ENCODE measurements at regions of chr9 and their contacts with region 1.

Region 1: DNA sequence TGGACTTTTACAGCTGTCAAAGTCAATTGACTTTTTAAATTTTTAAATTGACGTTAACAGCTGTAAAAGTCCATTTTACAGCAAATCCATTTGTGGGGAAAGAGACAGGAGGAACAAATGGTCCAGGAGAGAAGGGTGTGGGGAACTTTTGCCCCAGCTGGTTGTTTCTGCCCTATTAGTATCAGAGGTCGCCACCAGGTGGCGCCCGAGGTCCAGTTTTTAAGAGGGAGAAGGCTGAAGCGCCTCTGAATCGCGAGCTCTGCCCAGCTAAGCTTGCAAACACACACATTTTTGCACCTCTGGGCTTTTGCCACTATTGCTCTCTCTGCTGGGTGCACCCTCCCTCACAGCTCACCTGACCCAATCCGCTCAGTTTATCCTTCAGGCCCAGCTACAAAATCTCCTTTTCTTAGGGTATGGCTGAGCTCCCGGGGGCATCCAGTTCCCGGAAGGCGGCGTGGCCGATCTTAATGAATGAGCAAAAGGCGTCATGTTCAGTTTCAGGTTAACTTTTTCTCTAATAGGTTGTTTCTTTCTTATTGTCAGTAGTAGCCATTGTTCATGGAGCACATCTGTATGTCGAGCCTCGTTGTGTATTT is 6.3 kb upstream of the TTLL11 start:
- DNase-seq: peak; percentile 84
- H3K4me3 ChIP-seq: no peak overlapping the region
- H3K27ac ChIP-seq: no peak overlapping the region
- H3K4me1 ChIP-seq: no peaks in the 10 kb centered on the region
- CTCF ChIP-seq: peak; percentile 88

Region 2: DNA sequence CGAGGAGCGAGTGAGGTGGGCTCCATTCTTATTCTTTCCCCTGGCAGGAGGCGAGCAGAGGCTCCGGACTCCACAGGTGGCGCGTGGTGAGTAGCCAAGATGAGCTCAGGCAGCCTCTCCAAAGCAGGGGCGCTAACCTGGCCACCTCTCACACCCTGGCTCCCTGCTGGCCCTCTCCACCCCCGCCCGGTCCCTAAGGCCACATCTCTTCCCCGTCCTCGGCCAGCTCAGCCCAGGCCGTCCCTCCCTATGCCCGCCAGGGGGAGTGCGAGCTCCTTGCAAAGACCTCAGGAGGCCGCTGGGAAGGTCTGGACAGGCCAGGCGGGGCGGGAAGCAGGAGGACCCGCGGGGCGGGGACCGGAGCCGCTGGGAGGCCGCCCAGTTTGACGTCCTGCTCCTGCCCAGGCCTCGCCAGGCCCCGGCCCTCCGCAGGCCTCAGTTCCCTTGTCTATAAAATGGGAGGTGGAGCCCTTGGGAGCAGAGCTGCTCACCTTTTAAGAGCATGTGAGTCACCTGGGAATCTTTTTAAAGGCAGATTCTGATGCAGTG is 553.4 kb before region 1 on chr9:
- CTCF ChIA-PET with region 1: no interaction called
- POLR2A ChIA-PET with region 1: no interaction called
- intact Hi-C with region 1: loop called (anchors 5 kb)
- DNase-seq: peak; percentile 78
- H3K4me3 ChIP-seq: no peak overlapping the region
- H3K27ac ChIP-seq: no peak overlapping the region
- H3K4me1 ChIP-seq: peaks cover 4% of the 10 kb centered on the region
- CTCF ChIP-seq: peak; percentile 86

Region 3: DNA sequence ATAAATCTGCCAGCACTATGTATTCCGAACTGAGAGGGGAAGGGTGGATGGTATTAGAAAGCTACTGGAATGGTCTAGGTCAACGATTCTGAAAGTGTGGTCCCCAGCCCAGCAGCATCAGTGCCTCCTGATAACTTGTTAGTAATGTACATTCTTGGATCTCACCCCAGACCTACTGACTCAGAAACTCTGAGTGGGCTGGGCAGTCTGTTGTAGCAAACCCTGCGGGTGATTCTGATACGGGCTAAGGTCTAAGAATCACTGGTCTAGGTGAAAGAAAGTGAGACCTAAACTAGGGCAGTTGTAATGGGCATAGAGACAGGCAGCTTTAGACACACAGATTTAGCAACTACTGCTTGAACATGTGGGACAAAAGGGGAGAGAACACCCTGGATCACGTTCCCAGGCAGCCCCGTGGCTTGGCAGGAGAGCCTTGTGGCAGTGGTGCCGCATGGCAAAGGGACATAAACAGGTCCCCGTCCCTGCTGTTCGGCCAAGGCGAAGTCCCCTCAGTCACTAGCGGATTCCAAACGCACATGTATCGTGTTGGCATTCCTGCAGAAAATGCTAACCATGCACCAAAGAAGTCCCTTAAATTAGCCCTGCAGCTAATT is 222.6 kb before region 1 on chr9:
- CTCF ChIA-PET with region 1: no interaction called
- POLR2A ChIA-PET with region 1: no interaction called
- intact Hi-C with region 1: no loop called
- DNase-seq: no peak
- H3K4me3 ChIP-seq: no peak overlapping the region
- H3K27ac ChIP-seq: no peak overlapping the region
- H3K4me1 ChIP-seq: no peaks in the 10 kb centered on the region
- CTCF ChIP-seq: no peak

Region 4: GRCh38 chr9:122125158-122125508 is 25.8 kb after region 1 on chr9:
- CTCF ChIA-PET with region 1: interaction called, 10 read pairs
- POLR2A ChIA-PET with region 1: interaction called, 3 read pairs
- intact Hi-C with region 1: loop called (anchors 1 kb)
- DNase-seq: peak; percentile 74
- H3K4me3 ChIP-seq: no peak overlapping the region
- H3K27ac ChIP-seq: no peak overlapping the region
- H3K4me1 ChIP-seq: peaks cover 5% of the 10 kb centered on the region
- CTCF ChIP-seq: peak; percentile 92

Region 5: DNA sequence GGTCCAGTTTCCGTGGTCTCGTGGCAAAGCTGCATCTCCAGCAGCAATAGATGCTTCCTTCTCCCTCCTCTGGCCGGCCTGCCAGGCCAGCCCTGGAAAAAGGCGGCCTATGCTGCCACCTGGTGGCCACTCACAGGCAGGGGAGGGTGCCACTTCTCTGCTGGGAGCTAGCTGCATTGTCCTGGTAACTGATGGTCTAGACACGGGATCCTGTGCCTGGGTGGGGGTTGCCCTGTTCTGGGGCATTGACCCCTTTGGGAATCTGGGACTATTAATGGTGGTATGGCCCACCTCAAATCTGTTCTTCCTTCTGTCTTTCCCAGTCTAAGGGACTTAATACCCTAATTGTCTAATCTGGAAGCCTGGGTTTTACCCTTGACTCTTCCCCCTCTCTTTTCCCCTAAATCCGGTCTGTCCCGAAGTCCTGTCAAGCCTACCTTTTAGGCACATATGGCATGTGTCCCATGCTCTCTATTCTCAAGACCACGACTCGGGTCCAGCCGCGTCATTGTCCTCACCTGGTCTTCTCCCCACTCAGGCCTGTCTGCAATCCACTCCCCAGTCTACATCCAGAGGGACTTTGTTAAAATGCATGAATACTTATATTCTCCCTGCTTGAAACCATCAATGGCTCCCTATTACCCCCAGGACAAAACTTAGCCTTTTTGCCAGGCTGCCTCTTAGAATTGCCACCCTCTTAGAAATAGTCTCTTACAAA is 251.4 kb after region 1 on chr9:
- CTCF ChIA-PET with region 1: interaction called, 5 read pairs
- POLR2A ChIA-PET with region 1: interaction called, 3 read pairs
- intact Hi-C with region 1: loop called (anchors 1 kb)
- DNase-seq: peak; percentile 75
- H3K4me3 ChIP-seq: no peak overlapping the region
- H3K27ac ChIP-seq: no peak overlapping the region
- H3K4me1 ChIP-seq: no peaks in the 10 kb centered on the region
- CTCF ChIP-seq: peak; percentile 94